KBM-7 (cell line): ENCODE measurements at regions of chr12 and their contacts with region 1.

Region 1: DNA sequence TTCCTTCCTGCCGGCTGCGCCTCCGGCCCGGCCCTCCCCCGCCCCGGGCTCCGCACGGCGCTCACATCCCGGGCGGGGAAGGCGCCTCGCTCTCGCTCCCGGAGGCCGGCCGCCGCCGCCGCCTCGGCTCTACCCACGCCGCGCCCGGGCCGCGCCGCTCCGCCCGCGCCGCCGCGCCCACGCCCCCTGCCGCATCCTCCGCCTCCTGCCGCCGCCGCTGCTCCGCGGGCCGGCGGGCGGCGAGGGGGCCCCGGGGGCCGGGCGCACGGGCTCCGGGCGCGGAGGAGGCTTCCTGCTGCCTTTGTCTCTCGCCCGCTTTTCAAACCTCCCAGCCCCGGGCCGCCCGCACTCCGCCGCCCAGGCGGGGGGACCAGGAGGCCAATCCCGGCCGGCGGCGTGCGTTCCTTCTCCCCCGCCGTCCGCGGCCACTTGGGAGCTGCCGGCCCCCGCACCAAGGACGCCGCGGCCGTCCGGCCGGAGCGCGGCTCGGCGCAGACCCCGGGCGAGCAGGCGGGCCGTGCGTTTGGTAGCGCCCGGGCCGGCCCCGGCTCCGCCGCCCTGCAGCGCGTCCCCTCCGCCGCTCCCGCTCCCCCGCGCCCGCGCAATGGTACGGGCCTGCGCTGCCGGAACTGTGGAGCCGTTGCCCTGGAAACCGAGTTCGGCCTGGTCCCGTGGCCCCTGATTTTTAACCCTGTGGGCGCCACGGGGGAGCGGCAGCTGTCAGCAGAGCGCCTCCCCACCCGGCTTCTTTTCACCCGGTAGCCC is at the start of gene FBXL14:
- DNase-seq: peak; percentile 88

Region 2: GRCh38 chr12:569803-570434 is 1024.5 kb before region 1 on chr12:
- in situ Hi-C with region 1: loop called (anchors 25 kb)
- DNase-seq: peak; percentile 79

Region 3: DNA sequence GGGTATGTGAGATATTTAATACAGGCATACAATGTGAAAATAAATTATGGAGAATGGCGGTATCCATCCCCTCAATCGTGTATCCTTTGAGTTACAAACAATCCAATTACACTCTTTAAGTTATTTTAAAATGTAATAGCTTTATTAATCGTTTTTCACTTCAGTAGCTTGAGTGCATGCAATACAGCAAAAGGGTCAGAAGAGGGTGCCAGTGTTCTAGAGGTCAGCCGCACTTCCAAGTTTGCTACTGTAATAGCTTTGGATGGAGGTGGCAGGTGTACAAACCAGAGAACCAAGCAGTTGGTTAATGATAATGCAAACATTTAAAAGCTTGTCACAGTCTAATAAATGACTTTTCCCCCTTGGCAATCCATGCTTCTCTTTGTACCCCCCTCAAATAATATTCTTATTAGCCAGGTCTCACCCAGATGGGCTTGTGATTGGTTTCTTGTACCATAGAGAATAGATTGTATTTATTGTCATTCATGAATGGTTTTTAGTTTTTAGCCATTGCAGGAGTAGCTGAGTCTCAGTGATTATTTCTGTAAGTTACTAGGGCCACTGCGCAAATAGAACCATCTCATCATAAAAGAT is 476.4 kb before region 1 on chr12:
- in situ Hi-C with region 1: loop called (anchors 25 kb)
- DNase-seq: peak; percentile 74